ENCODE measurements at regions of chr7 and their contacts with region 1.

Region 1: DNA sequence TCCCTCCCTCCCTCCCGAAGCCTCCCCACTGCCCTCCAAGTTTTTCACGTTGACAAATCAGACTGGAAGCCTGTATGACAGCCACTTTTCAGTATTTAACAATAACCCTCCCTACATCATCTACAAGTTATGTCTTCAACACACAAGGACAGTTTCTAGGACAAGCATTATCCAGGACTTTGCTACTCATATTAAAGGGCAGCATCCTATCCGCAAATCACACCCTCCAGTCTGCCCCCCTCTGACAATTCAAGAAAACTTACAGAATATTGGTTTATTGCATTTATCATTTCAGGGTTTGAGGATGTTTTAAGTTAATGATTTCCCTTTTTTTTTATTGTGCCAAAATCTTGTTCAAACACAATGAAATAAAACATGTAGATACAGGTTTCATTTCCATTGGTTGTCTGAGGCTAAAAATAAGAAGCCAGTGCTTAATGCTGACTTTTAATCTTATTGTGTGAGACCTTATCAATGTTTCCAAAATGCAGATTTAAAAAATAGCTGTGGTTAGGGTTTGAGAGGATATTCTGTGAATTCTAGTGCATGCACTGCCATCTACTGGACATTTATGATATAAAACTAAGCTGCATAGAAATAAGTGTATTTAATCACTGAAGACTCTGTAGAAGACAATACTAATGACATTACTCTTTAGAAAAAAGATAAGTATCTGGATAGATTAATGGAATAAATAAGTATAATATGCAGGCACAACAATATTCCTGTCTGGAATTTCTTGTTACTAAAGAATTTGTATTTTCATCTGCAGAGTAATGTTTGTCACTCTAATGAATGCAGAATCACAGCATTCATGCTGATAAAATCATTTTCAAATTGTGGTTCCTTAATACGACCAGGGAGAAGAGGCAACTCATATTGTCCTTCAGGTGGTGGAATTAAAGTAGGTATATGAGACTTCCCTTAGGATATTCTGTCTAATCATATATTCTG is 64.1 kb downstream of the CAV1 start:
- DNase-seq: peak in 2 of 4 donors; percentile 64 to 76
- ATAC-seq: peak; percentile 64
- H3K4me3 ChIP-seq: no peak overlapping the region
- H3K27ac ChIP-seq: peak overlapping the region; percentile 16 to 28
- H3K4me1 ChIP-seq: peaks cover 0 to 24% of the 10 kb centered on the region in 2 donors
- H3K27me3 ChIP-seq: peaks cover 0 to 13% of the 10 kb centered on the region in 2 donors
- CTCF ChIP-seq: peak; percentile 57 to 60

Region 2: DNA sequence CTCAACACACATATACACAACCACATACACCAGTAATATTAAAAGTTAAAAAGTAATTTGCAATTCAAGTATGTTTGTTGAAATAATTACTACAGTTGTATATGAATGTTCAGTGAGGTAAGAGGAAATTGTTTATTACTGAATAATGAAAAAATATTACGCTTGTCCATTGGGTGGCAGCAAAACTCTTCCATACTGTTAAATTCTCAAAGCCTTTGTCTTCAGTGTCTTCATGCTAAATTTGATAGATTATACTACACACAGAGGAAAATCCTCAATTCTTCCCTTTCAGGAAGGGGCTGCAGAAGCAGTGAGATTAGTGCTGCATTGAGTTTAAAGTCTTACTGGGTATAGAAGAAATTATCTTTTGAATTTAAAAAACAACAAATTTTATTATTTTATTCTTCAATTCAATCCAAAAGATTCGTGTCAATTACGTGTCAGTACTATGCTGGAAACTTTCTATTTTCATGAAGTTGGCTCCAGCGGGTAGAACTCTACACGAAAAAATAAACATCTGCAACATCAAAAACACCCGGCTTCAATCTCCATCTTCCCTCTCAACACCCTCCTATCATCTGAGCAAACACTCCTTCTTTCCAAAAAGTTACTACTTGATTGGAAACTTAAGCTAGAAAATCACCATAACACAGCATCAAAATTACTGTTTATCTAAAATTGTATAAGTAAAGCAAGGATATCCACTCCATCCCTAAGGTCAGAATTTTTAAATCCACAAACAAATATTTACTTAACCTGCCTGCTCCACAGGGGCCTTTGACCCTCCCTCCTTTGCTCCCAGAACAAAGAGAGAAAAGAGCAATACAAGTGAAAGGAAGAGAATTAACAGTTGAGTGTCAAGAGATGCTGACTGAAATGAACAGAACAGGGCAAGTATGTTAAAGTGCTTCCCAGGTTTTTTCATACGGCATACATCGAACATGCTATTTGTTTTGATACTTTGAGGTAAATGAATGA is 415.6 kb before region 1 on chr7:
- intact Hi-C with region 1: loop called in 1 of 2 experiments (anchors 10 kb)
- DNase-seq: peak in 2 of 4 donors; percentile 45 to 70
- ATAC-seq: peak; percentile 74
- H3K4me3 ChIP-seq: no peak overlapping the region
- H3K27ac ChIP-seq: no peak overlapping the region
- H3K4me1 ChIP-seq: no peaks in the 10 kb centered on the region
- H3K27me3 ChIP-seq: no peaks in the 10 kb centered on the region
- CTCF ChIP-seq: peak; percentile 43 to 53

Region 3: GRCh38 chr7:116258734-116259133 is 330.2 kb before region 1 on chr7:
- intact Hi-C with region 1: loop called in 1 of 2 experiments (anchors 5 kb)
- DNase-seq: peak in 2 of 4 donors; percentile 65 to 79
- ATAC-seq: peak; percentile 87
- H3K4me3 ChIP-seq: no peak overlapping the region
- H3K27ac ChIP-seq: peak overlapping the region in 1 of 2 donors; percentile 1
- H3K4me1 ChIP-seq: peaks cover 0 to 7% of the 10 kb centered on the region in 2 donors
- H3K27me3 ChIP-seq: no peaks in the 10 kb centered on the region
- CTCF ChIP-seq: peak; percentile 62 to 74

Region 4: DNA sequence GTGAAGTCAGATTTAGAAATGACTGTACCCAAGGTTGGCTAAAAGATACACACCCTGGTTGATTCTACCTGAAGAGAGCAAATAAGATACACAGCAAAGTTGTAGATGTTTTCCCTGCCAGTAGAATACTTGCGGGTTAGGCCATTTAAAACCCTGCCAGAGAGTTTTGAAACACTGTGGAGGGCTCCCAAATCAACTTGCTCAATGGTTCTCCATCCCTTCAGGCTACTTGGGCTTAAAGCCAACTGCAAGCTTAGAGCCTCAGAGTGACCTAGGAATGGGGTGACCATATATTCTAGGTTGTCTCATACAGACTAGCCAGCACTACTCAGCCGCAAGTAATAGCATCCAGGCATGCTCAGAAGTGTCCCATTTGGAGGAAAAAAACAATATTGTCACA is 54.1 kb before region 1 on chr7:
- intact Hi-C with region 1: loop called in 1 of 2 experiments (anchors 10 kb)
- DNase-seq: no peak
- ATAC-seq: peak; percentile 45
- H3K4me3 ChIP-seq: no peak overlapping the region
- H3K27ac ChIP-seq: peak overlapping the region in 1 of 2 donors; percentile 13
- H3K4me1 ChIP-seq: peaks cover 8 to 40% of the 10 kb centered on the region in 2 donors
- H3K27me3 ChIP-seq: no peaks in the 10 kb centered on the region
- CTCF ChIP-seq: no peak

Region 5: GRCh38 chr7:116809636-116810266 is 220.8 kb after region 1 on chr7:
- intact Hi-C with region 1: loop called in 1 of 2 experiments (anchors 5 kb)
- DNase-seq: peak in 2 of 4 donors; percentile 68 to 83
- ATAC-seq: peak; percentile 93
- H3K4me3 ChIP-seq: no peak overlapping the region
- H3K27ac ChIP-seq: no peak overlapping the region
- H3K4me1 ChIP-seq: peaks cover 0 to 7% of the 10 kb centered on the region in 2 donors
- H3K27me3 ChIP-seq: no peaks in the 10 kb centered on the region
- CTCF ChIP-seq: peak; percentile 40 to 57

Measured in left lung (tissue), 14 donors.